ENCODE measurements at regions of chr14 and their contacts with region 1.

Region 1: DNA sequence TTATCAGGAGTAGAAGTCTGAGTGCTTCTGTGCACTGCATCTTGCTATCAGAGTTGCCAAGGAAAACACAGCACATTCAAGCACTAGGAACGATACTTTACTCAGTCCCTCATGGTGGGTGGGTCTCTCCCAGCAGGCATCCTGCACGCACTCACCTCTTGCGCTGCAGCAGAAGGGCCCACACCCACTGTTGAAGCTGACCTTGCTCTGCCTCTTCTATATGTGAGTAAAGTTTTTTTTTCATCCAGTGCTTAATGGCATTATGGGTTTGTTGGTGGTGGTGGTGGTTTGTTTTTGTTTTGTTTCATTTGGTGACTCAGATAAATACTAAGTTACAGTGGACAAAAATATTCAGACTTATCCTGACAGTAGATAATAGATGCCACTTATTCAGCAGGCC is 348.5 kb downstream of the EGLN3 start:
- DNase-seq: no peak
- H3K4me3 ChIP-seq: no peak overlapping the region
- H3K27ac ChIP-seq: no peak overlapping the region
- H3K4me1 ChIP-seq: peaks cover 10% of the 10 kb centered on the region
- H3K27me3 ChIP-seq: no peaks in the 10 kb centered on the region
- CTCF ChIP-seq: no peak

Region 2: DNA sequence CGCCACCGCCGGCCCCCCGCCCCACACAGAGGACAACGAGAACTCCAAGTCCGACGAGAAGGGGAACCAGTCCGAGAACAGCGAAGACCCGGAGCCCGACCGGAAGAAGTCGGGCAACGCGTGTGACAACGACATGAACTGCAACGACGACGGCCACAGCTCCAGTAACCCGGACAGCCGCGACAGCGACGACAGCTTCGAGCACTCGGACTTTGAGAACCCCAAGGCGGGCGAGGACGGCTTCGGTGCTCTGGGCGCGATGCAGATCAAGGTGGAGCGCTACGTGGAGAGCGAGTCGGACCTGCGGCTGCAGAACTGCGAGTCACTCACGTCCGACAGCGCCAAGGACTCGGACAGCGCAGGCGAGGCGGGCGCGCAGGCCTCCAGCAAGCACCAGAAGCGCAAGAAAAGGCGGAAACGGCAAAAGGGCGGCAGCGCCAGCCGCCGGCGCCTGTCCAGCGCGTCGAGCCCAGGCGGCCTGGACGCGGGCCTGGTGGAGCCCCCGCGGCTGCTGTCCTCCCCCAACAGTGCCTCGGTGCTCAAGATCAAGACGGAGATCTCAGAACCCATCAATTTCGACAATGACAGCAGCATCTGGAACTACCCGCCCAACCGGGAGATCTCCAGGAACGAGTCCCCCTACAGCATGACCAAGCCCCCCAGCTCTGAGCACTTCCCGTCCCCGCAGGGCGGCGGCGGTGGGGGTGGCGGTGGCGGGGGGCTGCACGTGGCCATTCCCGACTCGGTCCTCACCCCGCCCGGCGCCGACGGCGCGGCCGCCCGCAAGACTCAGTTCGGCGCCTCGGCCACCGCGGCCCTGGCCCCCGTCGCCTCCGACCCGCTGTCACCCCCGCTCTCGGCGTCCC is 197.5 kb after region 1 on chr14:
- CTCF ChIA-PET with region 1: no interaction called
- POLR2A ChIA-PET with region 1: interaction called, 22 read pairs
- intact Hi-C with region 1: no loop called
- DNase-seq: no peak
- H3K4me3 ChIP-seq: no peak overlapping the region
- H3K27ac ChIP-seq: no peak overlapping the region
- H3K4me1 ChIP-seq: no peaks in the 10 kb centered on the region
- H3K27me3 ChIP-seq: no peaks in the 10 kb centered on the region
- CTCF ChIP-seq: no peak

Measured in A673 (cell line).